Activated CD4-positive, alpha-beta T cell treated with anti-CD3 and anti-CD28 coated beads for 36 hours (primary cell): ENCODE measurements at regions of chr15 and their contacts with region 1.

Region 1: DNA sequence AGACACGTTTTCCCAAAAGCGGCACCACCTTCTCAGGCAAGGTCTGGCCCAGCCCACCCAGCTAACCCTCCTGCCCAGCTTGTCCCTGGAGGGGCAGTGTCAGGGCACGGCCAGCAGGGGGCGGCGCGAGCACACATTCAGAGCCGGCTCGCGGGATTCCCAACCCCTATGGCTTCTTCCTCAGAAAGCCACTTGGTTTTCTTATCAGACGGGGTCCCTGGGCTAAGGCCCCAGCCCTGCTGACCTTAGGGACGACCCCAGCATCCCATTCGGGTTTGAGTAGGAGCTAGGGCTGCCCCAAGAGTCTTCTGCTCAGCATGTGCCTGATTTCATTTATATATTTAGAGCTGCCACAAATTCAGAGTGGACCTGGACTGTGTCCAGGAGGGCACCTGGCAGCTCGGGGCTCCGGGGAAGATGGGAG is 14.5 kb downstream of the RLBP1 start:
- DNase-seq: peak; percentile 86
- ATAC-seq: peak; percentile 80
- H3K4me3 Mint-ChIP-seq: no peak overlapping the region
- H3K27ac Mint-ChIP-seq: peak overlapping the region; percentile 39
- H3K4me1 Mint-ChIP-seq: peaks cover 36% of the 10 kb centered on the region
- H3K27me3 Mint-ChIP-seq: peaks cover 6% of the 10 kb centered on the region

Region 2: DNA sequence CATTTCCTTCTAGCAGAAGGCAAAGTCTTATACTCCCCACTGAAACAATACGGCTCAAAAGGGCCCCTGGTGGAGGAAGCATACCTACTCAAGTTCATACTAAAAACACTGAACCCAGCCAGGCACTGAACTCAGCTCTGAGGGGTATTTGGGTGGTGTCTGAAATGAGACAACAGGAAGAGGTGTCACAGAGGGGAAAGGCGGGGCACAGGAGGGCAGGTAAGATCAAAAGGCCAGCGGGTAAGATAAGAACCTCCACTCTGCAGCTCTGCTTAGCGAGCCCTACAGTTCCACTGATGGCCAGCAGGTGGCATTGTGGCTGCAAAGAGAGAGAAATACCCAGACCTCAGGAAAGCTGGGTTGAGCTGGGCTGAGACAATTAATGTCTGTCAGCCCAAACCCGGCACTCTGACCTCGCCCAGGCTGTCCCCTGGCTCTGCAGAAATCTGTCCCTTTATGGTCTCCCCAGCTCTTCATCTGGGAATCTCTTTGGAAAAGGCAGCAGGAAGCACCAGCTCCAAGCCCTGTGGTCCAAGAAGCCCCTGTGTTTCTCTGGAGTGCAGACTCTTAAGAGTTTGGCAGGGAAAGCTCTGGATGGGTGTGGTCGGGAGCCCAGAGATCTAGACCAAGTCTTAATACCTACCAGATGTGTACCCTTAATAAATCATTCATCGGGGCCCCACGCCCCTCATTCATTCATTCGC is 302.1 kb before region 1 on chr15:
- CTCF ChIA-PET with region 1: interaction called, 13 read pairs
- POLR2A ChIA-PET with region 1: no interaction called
- intact Hi-C with region 1: no loop called
- DNase-seq: peak; percentile 95
- ATAC-seq: peak; percentile 99
- H3K4me3 Mint-ChIP-seq: no peak overlapping the region
- H3K27ac Mint-ChIP-seq: peak overlapping the region; percentile 78
- H3K4me1 Mint-ChIP-seq: peaks cover 34% of the 10 kb centered on the region
- H3K27me3 Mint-ChIP-seq: no peaks in the 10 kb centered on the region

Region 3: DNA sequence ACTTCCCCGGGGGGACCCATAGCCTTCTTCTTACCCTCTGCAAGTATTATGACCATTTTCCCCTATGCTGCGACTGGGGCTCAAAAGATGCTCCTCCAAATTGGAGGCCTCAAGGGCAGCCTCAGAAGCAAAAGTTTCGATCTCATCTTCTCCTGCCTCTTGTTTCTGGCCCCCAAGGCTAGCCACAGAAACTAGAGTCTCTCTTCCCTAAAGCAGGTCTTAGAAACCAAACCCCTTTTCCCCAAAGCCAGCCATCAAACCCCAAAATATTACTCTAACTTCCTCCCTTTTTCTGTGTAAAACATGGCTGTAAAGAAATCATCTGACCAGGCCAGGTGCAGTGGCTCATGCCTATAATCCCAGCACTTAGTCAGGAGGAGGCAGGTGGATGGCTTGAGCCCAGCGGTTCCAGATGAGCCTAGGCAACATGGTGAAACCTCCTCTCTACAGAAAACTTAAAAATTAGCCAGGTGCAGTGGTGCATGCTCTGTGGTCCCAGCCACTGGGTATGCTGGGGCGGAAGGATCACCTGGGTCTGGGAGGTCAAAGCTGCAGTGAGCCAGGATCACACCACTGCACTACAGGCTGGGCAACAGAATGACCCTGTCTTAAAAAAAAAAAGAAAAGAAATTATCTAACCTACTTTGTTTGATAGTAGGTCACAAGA is 257.1 kb before region 1 on chr15:
- CTCF ChIA-PET with region 1: no interaction called
- POLR2A ChIA-PET with region 1: no interaction called
- intact Hi-C with region 1: no loop called
- DNase-seq: no peak
- ATAC-seq: no peak
- H3K4me3 Mint-ChIP-seq: no peak overlapping the region
- H3K27ac Mint-ChIP-seq: no peak overlapping the region
- H3K4me1 Mint-ChIP-seq: no peaks in the 10 kb centered on the region
- H3K27me3 Mint-ChIP-seq: no peaks in the 10 kb centered on the region

Region 4: GRCh38 chr15:89171136-89172072 is 35.5 kb before region 1 on chr15:
- CTCF ChIA-PET with region 1: interaction called, 17 read pairs
- POLR2A ChIA-PET with region 1: no interaction called
- intact Hi-C with region 1: no loop called
- DNase-seq: peak; percentile 65
- ATAC-seq: no peak
- H3K4me3 Mint-ChIP-seq: no peak overlapping the region
- H3K27ac Mint-ChIP-seq: no peak overlapping the region
- H3K4me1 Mint-ChIP-seq: peaks cover 30% of the 10 kb centered on the region
- H3K27me3 Mint-ChIP-seq: no peaks in the 10 kb centered on the region

Region 5: DNA sequence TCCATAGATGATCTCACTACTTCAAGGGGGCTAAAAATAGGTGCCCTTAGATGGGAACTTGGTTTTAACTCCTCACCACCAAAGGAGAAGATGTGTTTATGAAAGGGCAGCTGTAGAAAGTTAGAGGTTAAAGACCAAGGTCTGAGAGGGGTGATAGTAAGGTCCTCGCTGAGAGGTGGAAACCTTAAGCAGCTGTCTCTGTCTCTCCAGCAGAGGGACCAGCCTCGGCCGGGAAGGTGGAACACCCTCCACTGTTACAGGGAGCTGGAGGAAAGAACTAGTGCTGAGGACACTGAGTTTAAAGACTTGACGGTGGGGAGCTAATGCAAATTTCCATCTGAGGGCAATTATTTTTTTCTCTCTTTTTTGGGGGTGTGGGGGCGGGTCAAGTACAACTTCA is 23.4 kb after region 1 on chr15:
- CTCF ChIA-PET with region 1: interaction called, 11 read pairs
- POLR2A ChIA-PET with region 1: no interaction called
- intact Hi-C with region 1: no loop called
- DNase-seq: no peak
- ATAC-seq: no peak
- H3K4me3 Mint-ChIP-seq: no peak overlapping the region
- H3K27ac Mint-ChIP-seq: no peak overlapping the region
- H3K4me1 Mint-ChIP-seq: no peaks in the 10 kb centered on the region
- H3K27me3 Mint-ChIP-seq: peaks cover 8% of the 10 kb centered on the region

Region 6: GRCh38 chr15:89278307-89278706 is 71.4 kb after region 1 on chr15:
- CTCF ChIA-PET with region 1: interaction called, 13 read pairs
- POLR2A ChIA-PET with region 1: no interaction called
- intact Hi-C with region 1: no loop called
- DNase-seq: no peak
- ATAC-seq: peak; percentile 47
- H3K4me3 Mint-ChIP-seq: no peak overlapping the region
- H3K27ac Mint-ChIP-seq: no peak overlapping the region
- H3K4me1 Mint-ChIP-seq: peaks cover 8% of the 10 kb centered on the region
- H3K27me3 Mint-ChIP-seq: no peaks in the 10 kb centered on the region

Region 7: DNA sequence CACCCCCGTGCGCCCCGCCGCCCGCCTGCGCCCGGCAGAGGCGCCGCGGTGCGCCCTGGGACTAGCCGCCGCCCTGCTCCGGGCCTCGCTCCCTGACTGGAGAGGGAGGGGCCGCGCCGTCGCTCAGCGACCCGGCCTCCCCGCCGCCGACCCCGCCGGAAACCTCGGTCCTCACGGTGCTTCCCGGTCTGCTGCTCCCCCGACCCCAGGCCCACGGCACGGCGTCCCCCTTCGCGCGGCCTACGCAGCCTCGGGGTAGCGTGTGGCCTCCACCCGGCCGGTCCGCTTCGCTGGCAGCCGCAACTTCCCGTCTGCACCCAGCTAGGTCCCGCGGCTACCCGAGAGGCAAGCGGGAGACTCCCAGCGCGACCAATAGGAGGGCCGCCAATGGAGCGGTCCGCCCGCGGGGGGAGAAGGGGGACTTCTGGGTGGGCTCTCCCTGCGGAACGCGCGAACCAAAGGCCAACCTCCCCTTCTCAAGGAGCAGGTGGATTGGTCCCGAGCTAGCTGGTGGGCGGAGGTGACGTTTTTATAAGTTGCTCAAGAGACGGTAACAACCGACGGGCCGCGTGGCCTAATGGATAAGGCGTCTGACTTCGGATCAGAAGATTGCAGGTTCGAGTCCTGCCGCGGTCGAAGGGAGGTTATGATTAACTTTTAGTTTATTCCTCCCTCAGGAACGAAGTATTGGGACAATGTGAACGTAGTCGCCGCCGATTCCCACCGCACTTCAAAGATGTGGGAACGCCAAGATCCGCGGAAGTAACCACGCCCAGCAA is 127.8 kb after region 1 on chr15 and contains the start of gene POLG:
- CTCF ChIA-PET with region 1: interaction called, 7 read pairs
- POLR2A ChIA-PET with region 1: interaction called, 6 read pairs
- intact Hi-C with region 1: loop called in 1 of 2 experiments (anchors 2 kb)
- DNase-seq: peak; percentile 99
- ATAC-seq: peak; percentile 92
- H3K4me3 Mint-ChIP-seq: peak within 1 kb of the TSS; percentile 80
- H3K27ac Mint-ChIP-seq: peak within 1 kb of the TSS; percentile 87
- H3K4me1 Mint-ChIP-seq: peaks cover 56% of the 10 kb centered on the region
- H3K27me3 Mint-ChIP-seq: peaks cover 2% of the 10 kb centered on the region
- total RNA-seq, gene POLG: 63.2 to 80.4 TPM

Region 8: DNA sequence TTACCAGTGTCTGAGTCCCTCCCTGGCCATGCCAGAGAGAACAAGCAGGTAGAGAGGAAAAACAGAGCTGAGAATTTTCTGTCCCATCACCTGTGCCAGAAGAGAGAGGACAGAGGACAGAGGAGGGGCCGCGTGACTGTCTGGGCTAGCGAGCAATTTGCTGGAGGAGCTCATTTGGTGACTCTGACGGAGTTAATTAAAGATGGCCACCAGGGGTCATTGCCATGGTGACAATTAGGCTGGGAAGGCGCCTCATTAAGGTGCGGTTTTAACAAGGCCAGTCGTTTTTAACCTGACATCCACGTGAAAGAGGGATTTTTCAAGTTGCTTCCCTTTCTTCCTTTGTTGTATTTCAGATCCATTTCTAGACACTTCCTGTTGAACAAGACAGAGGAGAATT is 217.1 kb after region 1 on chr15:
- CTCF ChIA-PET with region 1: no interaction called
- POLR2A ChIA-PET with region 1: no interaction called
- intact Hi-C with region 1: no loop called
- DNase-seq: no peak
- ATAC-seq: no peak
- H3K4me3 Mint-ChIP-seq: no peak overlapping the region
- H3K27ac Mint-ChIP-seq: no peak overlapping the region
- H3K4me1 Mint-ChIP-seq: no peaks in the 10 kb centered on the region
- H3K27me3 Mint-ChIP-seq: peaks cover 34% of the 10 kb centered on the region

Region 9: GRCh38 chr15:89760303-89761008 is 553.5 kb after region 1 on chr15:
- CTCF ChIA-PET with region 1: no interaction called
- POLR2A ChIA-PET with region 1: no interaction called
- intact Hi-C with region 1: no loop called
- DNase-seq: peak; percentile 85
- ATAC-seq: peak; percentile 88
- H3K4me3 Mint-ChIP-seq: no peak overlapping the region
- H3K27ac Mint-ChIP-seq: no peak overlapping the region
- H3K4me1 Mint-ChIP-seq: no peaks in the 10 kb centered on the region
- H3K27me3 Mint-ChIP-seq: peaks cover 6% of the 10 kb centered on the region